B cell (primary cell): ENCODE measurements at regions of chr5 and their contacts with region 1.

Region 1: DNA sequence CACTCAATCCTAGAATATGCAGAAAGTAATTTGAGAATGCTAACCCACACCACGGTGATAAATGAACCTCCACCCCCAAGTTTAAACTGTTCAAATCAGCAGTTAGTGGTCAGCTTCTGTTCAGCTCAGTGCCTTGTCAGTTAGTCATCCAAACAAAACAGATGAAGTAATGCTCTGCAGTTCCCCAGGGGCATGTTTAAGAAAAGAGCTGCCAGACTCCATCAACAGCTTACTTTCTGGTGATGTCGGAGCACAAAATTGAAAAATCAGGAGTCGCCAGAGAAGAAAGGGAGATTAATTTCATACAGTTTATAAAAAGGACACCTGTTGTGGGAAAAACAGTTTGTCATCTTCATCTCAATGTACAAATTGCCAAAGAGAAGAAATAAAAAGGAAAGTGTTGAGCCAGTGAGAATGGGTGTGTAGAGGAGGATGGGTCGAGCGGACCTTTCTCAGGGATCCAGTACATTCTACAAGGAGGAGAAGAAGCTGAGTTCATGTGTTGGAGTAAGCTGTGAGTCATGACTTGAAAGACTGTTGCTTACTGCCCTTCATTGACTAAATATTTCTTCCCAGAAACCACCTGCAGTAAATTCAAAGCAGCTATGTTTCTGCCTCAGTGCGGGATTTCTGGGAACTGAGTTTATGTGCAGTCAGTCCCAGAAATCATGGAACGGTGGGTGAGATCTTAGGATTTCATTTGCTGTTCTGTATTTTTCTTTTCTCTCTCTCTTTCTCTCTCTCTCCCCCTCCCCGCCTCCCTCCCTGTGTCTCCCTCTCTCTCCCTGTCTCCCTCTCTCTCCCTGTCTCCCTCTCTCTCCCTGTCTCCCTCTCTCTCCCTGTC is 13.7 kb downstream of the TRIO start:
- DNase-seq: peak; percentile 48
- ATAC-seq: peak; percentile 60
- H3K4me3 ChIP-seq: peak overlapping the region in 1 of 5 experiments; percentile 49
- H3K4me3 Mint-ChIP-seq: no peak overlapping the region
- H3K27ac ChIP-seq: peak overlapping the region; percentile 83 to 91
- H3K27ac Mint-ChIP-seq: no peak overlapping the region
- H3K4me1 ChIP-seq: peaks cover 53 to 78% of the 10 kb centered on the region in 2 donors
- H3K4me1 Mint-ChIP-seq: peaks cover 44% of the 10 kb centered on the region
- H3K27me3 ChIP-seq: no peaks in the 10 kb centered on the region
- H3K27me3 Mint-ChIP-seq: no peaks in the 10 kb centered on the region
- CTCF ChIP-seq: no peak

Region 2: GRCh38 chr5:13814302-13814701 is 342.6 kb before region 1 on chr5:
- CTCF ChIA-PET with region 1: no interaction called
- POLR2A ChIA-PET with region 1: no interaction called
- intact Hi-C with region 1: no loop called
- DNase-seq: no peak
- ATAC-seq: no peak
- H3K4me3 ChIP-seq: no peak overlapping the region
- H3K4me3 Mint-ChIP-seq: no peak overlapping the region
- H3K27ac ChIP-seq: no peak overlapping the region
- H3K27ac Mint-ChIP-seq: no peak overlapping the region
- H3K4me1 ChIP-seq: no peaks in the 10 kb centered on the region
- H3K4me1 Mint-ChIP-seq: no peaks in the 10 kb centered on the region
- H3K27me3 ChIP-seq: no peaks in the 10 kb centered on the region
- H3K27me3 Mint-ChIP-seq: no peaks in the 10 kb centered on the region
- CTCF ChIP-seq: no peak

Region 3: GRCh38 chr5:14115323-14115905 is 41.5 kb before region 1 on chr5:
- CTCF ChIA-PET with region 1: no interaction called
- POLR2A ChIA-PET with region 1: no interaction called
- intact Hi-C with region 1: no loop called
- DNase-seq: no peak
- ATAC-seq: no peak
- H3K4me3 ChIP-seq: no peak overlapping the region
- H3K4me3 Mint-ChIP-seq: no peak overlapping the region
- H3K27ac ChIP-seq: no peak overlapping the region
- H3K27ac Mint-ChIP-seq: no peak overlapping the region
- H3K4me1 ChIP-seq: no peaks in the 10 kb centered on the region
- H3K4me1 Mint-ChIP-seq: no peaks in the 10 kb centered on the region
- H3K27me3 ChIP-seq: no peaks in the 10 kb centered on the region
- H3K27me3 Mint-ChIP-seq: peaks cover 3% of the 10 kb centered on the region
- CTCF ChIP-seq: no peak

Region 4: DNA sequence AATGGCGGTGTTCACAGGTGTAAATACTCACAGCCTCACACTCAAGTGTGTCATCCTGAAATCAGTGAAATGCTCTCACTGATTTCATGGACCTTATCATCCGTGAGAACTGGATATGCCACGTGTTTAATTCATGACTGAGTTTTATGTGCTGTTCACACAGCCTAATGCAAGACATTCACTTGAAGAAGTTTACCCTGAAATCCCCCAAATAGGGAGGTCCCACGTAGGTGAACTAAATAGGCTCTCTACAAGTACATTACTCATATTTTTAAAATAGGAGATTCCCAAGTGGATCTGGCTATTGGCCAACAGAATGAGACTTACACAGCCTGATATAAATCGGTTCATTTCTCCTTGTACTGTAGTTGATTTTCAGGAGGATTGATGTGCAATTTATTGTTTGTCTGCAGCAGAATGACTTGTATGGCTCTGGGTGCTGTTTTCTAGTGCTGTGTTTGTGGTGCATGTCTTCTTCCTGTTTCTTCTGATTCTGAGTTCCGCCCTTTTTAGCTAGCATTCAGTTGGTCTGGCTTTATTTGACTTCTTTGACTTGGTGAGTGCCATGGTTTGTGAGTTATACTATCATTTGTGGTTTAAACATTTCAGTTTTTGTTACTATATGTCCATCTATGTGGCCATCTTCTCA is 11.4 kb after region 1 on chr5:
- CTCF ChIA-PET with region 1: interaction called, 7 read pairs
- POLR2A ChIA-PET with region 1: interaction called, 7 read pairs
- intact Hi-C with region 1: loop called (anchors 1 kb)
- DNase-seq: peak; percentile 67
- ATAC-seq: peak; percentile 62
- H3K4me3 ChIP-seq: peak overlapping the region; percentile 19 to 62 (median 54)
- H3K4me3 Mint-ChIP-seq: peak overlapping the region; percentile 85
- H3K27ac ChIP-seq: peak overlapping the region; percentile 65 to 83
- H3K27ac Mint-ChIP-seq: peak overlapping the region; percentile 90
- H3K4me1 ChIP-seq: peaks cover 64 to 65% of the 10 kb centered on the region in 2 donors
- H3K4me1 Mint-ChIP-seq: peaks cover 83% of the 10 kb centered on the region
- H3K27me3 ChIP-seq: no peaks in the 10 kb centered on the region
- H3K27me3 Mint-ChIP-seq: no peaks in the 10 kb centered on the region
- CTCF ChIP-seq: no peak

Region 5: GRCh38 chr5:14250084-14250695 is 93.3 kb after region 1 on chr5:
- CTCF ChIA-PET with region 1: interaction called, 4 read pairs
- POLR2A ChIA-PET with region 1: interaction called, 7 read pairs
- intact Hi-C with region 1: loop called (anchors 5 kb)
- DNase-seq: peak; percentile 35
- ATAC-seq: peak; percentile 15
- H3K4me3 ChIP-seq: no peak overlapping the region
- H3K4me3 Mint-ChIP-seq: peak overlapping the region; percentile 68
- H3K27ac ChIP-seq: peak overlapping the region; percentile 71 to 75
- H3K27ac Mint-ChIP-seq: peak overlapping the region; percentile 91
- H3K4me1 ChIP-seq: peaks cover 37 to 40% of the 10 kb centered on the region in 2 donors
- H3K4me1 Mint-ChIP-seq: peaks cover 83% of the 10 kb centered on the region
- H3K27me3 ChIP-seq: no peaks in the 10 kb centered on the region
- H3K27me3 Mint-ChIP-seq: no peaks in the 10 kb centered on the region
- CTCF ChIP-seq: no peak

Region 6: GRCh38 chr5:14260637-14261036 is 103.8 kb after region 1 on chr5:
- CTCF ChIA-PET with region 1: no interaction called
- POLR2A ChIA-PET with region 1: no interaction called
- intact Hi-C with region 1: no loop called
- DNase-seq: no peak
- ATAC-seq: no peak
- H3K4me3 ChIP-seq: no peak overlapping the region
- H3K4me3 Mint-ChIP-seq: no peak overlapping the region
- H3K27ac ChIP-seq: no peak overlapping the region
- H3K27ac Mint-ChIP-seq: no peak overlapping the region
- H3K4me1 ChIP-seq: peaks cover 35 to 41% of the 10 kb centered on the region in 2 donors
- H3K4me1 Mint-ChIP-seq: peaks cover 82% of the 10 kb centered on the region
- H3K27me3 ChIP-seq: no peaks in the 10 kb centered on the region
- H3K27me3 Mint-ChIP-seq: no peaks in the 10 kb centered on the region
- CTCF ChIP-seq: no peak

Region 7: GRCh38 chr5:14914603-14915277 is 757.9 kb after region 1 on chr5:
- CTCF ChIA-PET with region 1: no interaction called
- POLR2A ChIA-PET with region 1: no interaction called
- intact Hi-C with region 1: no loop called
- DNase-seq: no peak
- ATAC-seq: no peak
- H3K4me3 ChIP-seq: no peak overlapping the region
- H3K4me3 Mint-ChIP-seq: no peak overlapping the region
- H3K27ac ChIP-seq: no peak overlapping the region
- H3K27ac Mint-ChIP-seq: no peak overlapping the region
- H3K4me1 ChIP-seq: no peaks in the 10 kb centered on the region
- H3K4me1 Mint-ChIP-seq: no peaks in the 10 kb centered on the region
- H3K27me3 ChIP-seq: peaks cover 0 to 5% (median 0%) of the 10 kb centered on the region in 4 experiments
- H3K27me3 Mint-ChIP-seq: peaks cover 38% of the 10 kb centered on the region
- CTCF ChIP-seq: no peak